HCT116 (cell line): ENCODE measurements at regions of chr18 and their contacts with region 1.

Region 1: DNA sequence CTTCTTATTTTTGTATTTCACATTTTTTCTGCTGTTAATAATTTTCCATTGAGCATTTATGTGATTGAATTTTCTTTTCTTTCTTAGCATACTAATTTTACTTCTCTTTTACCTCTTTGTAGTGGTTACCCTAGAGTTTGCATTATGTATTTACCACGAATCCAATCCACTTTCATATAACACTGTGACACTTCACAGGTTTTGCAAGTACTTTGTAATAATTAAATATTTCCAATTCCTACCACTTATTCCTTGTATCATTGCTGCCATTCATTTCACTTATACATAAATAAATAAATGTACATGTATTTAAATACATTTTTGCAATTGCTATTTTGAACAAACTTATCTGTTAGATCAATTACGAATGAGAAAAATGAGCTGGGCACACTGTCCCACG is 110.8 kb downstream of the TGIF1 start:
- DNase-seq: no peak
- ATAC-seq: no peak
- H3K4me3 ChIP-seq: no peak overlapping the region
- H3K27ac ChIP-seq: no peak overlapping the region
- H3K4me1 ChIP-seq: no peaks in the 10 kb centered on the region
- H3K27me3 ChIP-seq: no peaks in the 10 kb centered on the region
- CTCF ChIP-seq: no peak
- POLR2A ChIP-seq: no peak
- RAD21 ChIP-seq: no peak

Region 2: DNA sequence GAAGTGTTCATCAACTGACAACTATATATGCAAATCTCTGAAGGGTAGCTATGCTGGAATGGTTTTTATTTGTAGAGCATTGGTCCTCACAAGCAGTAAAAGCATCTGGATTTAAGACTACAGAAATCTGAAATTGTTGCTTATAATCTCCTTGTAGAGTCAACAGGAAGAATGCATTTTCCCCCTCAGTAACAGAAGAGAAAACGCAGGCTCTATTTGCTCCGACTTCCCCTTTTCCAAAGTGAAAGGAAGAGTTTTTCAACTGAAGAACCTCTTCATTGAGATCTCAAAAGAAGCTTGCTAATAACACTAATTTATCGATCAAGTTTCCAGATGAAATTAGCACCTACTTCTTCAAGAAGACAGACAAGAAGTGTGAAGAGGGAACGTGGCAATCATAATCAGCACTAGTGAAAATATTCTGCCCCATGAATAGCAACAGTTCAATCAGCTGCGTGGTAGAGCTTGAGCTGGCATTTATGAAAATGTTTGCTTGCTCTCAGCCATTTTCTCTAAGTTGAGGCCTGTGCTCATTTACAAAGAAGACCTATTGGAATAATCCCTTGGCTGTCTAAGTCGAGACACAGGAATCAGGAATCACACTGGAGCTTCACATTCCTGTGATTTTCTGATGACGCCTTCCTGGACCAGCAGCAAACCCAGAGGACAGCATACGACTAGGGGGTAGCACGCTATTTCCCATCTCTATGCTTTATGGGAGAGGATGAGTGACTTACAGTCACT is 67.1 kb before region 1 on chr18:
- CTCF ChIA-PET with region 1: no interaction called
- POLR2A ChIA-PET with region 1: no interaction called
- RAD21 ChIA-PET with region 1: no interaction called
- intact Hi-C with region 1: loop called (anchors 5 kb)
- DNase-seq: no peak
- ATAC-seq: no peak
- H3K4me3 ChIP-seq: no peak overlapping the region
- H3K27ac ChIP-seq: no peak overlapping the region
- H3K4me1 ChIP-seq: peaks cover 0 to 13% of the 10 kb centered on the region in 2 experiments; a peak in 2 of 4 replicates
- H3K27me3 ChIP-seq: no peaks in the 10 kb centered on the region
- CTCF ChIP-seq: no peak
- POLR2A ChIP-seq: no peak
- RAD21 ChIP-seq: no peak

Region 3: GRCh38 chr18:3525870-3526420 is 34.8 kb before region 1 on chr18:
- CTCF ChIA-PET with region 1: no interaction called
- POLR2A ChIA-PET with region 1: no interaction called
- RAD21 ChIA-PET with region 1: no interaction called
- intact Hi-C with region 1: loop called (anchors 5 kb)
- DNase-seq: no peak
- ATAC-seq: no peak
- H3K4me3 ChIP-seq: no peak overlapping the region
- H3K27ac ChIP-seq: no peak overlapping the region
- H3K4me1 ChIP-seq: no peaks in the 10 kb centered on the region
- H3K27me3 ChIP-seq: no peaks in the 10 kb centered on the region
- CTCF ChIP-seq: no peak
- POLR2A ChIP-seq: no peak
- RAD21 ChIP-seq: no peak